Activated T-helper 1 cell treated with anti-CD3 and anti-CD28 coated beads, Interleukin-12 subunit alpha, Interleukin-12 subunit beta, Interleukin-2, Interleukin-4 antibody, amounts not matched to agents 30 ng/mL and 10 ng/mL and 1 ng/mL, durations not matched to agents 14 hours and 24 hours and 36 hours (primary cell): ENCODE measurements at regions of chr11 and their contacts with region 1.

Region 1: GRCh38 chr11:69122642-69123431 is 32.9 kb upstream of the SMIM38 start:
- DNase-seq: peak; percentile 40
- H3K4me3 Mint-ChIP-seq: peak overlapping the region; percentile 59
- H3K27ac Mint-ChIP-seq: peak overlapping the region; percentile 5
- H3K4me1 Mint-ChIP-seq: peaks cover 36% of the 10 kb centered on the region
- H3K27me3 Mint-ChIP-seq: peaks cover 2% of the 10 kb centered on the region

Region 2: GRCh38 chr11:69166218-69167115 is 43.6 kb after region 1 on chr11:
- intact Hi-C with region 1: loop called (anchors 1 kb)
- DNase-seq: peak; percentile 17
- H3K4me3 Mint-ChIP-seq: peak overlapping the region; percentile 67
- H3K27ac Mint-ChIP-seq: peak overlapping the region; percentile 90
- H3K4me1 Mint-ChIP-seq: peaks cover 24% of the 10 kb centered on the region
- H3K27me3 Mint-ChIP-seq: peaks cover 2% of the 10 kb centered on the region

Region 3: DNA sequence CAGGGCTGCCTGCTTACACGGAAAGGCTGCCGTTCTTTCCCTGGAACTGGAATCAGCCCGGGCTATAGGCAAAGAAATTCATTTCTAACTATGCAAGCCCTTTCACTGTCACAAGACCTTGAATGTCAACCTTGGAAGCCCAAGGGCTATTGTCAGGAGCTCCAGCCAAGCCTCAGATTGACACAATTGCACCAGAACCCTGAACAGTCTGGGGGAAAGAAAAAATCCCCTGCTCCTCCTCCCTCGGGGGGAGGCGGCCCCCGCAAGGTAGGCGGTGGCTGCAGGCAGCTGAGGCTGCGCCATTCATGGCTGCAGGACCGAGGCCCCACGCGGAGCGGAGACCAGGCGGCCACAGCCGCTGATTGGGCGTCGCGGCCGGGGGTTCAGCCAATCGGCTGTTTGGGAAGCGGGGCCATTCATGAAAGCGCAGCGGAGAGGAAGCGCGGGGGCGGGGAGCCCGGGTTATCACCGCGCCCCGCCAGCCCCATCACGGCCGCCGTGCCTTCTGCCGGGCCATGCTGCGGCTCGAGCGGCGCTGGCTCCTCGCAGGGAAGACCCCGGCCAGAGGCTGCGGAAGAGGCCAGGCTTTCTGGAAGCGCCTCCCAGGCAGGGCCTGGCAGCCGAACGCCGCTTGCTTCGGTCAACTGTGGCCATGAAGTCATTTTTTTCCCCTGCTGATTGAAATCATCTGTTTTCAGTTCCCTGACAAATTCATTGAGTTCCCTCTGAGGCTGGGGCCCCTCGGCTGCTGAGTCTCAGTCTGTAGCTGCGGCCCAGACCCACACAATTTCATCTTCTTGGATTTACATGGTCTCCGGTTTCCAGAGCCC is 320.5 kb after region 1 on chr11:
- intact Hi-C with region 1: loop called (anchors 1 kb)
- DNase-seq: peak; percentile 71
- H3K4me3 Mint-ChIP-seq: peak overlapping the region; percentile 63
- H3K27ac Mint-ChIP-seq: peak overlapping the region; percentile 52
- H3K4me1 Mint-ChIP-seq: peaks cover 7% of the 10 kb centered on the region
- H3K27me3 Mint-ChIP-seq: peaks cover 4% of the 10 kb centered on the region

Region 4: GRCh38 chr11:69546735-69547370 is 424.0 kb after region 1 on chr11:
- intact Hi-C with region 1: loop called (anchors 5 kb)
- DNase-seq: no peak
- H3K4me3 Mint-ChIP-seq: no peak overlapping the region
- H3K27ac Mint-ChIP-seq: no peak overlapping the region
- H3K4me1 Mint-ChIP-seq: peaks cover 10% of the 10 kb centered on the region
- H3K27me3 Mint-ChIP-seq: peaks cover 9% of the 10 kb centered on the region